Psoas muscle (tissue), 8 donors: ENCODE measurements at regions of chr2 and their contacts with region 1.

Region 1: DNA sequence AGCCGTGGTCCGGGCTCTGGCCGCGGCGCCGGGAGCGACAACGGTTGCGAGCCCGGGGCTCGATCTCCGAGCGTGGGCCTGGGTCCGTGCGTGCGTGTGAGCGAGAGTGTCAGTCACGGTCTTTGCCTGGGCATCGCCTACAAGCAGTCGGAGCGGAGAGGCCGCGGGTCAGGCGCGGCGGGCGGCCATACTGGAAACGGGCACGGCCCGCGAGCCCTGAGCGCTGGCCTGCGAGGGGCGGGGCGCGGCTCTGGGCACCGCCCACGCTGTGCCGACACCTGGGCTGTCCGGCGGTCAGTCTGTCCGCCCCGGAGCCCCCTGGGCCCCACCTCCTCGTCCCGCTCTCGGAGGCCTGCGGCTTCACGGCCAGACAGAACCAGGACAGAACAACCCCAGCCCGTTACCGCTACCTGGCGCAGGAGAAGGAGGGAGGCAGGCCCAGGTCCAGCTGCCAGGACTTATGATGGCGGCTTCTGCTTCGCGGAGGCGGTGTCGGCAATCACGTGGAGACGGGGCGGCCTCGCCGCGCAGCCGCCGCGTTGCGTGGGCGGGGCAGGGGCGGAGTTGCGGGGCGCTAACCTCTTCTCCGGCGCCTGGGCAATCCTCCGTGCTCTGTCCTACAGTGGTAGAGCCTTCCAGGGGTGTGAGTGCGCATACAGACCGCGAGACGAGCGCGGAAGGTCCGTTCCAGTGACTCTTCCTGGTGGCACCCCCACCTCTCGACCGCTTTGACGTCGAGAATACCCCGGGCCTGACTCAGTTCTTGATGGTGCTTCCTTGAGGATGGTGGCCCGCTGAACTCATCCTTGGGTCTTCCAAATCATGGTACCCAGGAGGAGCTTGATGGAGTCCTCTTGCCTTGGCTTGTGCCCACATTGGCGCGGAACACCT is at the start of gene TMEM131:
- DNase-seq: peak; percentile 96 to 98
- ATAC-seq: peak; percentile 93 to 96 (median 94)
- H3K4me3 ChIP-seq: peak within 1 kb of the TSS; percentile 90
- H3K27ac ChIP-seq: peak within 1 kb of the TSS; percentile 99
- H3K4me1 ChIP-seq: peaks cover 33% of the 10 kb centered on the region
- H3K27me3 ChIP-seq: no peaks in the 10 kb centered on the region
- CTCF ChIP-seq: no peak
- total RNA-seq, gene TMEM131: 20.1 to 33.3 (median 27.0) TPM

Region 2: GRCh38 chr2:97812931-97813330 is 183.0 kb before region 1 on chr2:
- intact Hi-C with region 1: loop called (anchors 5 to 10 kb)
- DNase-seq: no peak
- ATAC-seq: no peak
- H3K4me3 ChIP-seq: no peak overlapping the region
- H3K27ac ChIP-seq: no peak overlapping the region
- H3K4me1 ChIP-seq: no peaks in the 10 kb centered on the region
- H3K27me3 ChIP-seq: no peaks in the 10 kb centered on the region
- CTCF ChIP-seq: no peak

Region 3: DNA sequence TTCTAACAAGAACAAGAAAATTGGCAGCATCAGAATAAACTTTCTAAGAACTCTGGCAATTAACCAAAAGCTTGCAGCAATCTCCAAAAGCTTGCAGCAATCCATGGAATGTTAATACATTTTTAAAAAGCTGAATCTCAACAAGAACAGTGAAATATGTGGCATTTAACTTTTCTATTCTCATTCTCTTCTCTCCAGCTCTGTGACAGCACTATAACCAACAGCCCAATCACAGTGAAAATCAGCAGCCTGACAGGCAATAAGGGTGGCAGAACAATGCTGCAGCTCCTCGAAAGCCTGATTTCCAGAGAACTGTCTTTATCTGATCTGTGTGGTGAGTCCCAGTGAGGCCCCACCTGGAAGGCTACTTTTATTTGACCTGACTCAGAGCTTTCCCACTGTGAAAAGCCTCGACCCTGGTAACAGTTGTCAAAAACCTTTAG is 60.2 kb before region 1 on chr2:
- intact Hi-C with region 1: loop called in 1 of 2 experiments (anchors 5 kb)
- DNase-seq: no peak
- ATAC-seq: peak; percentile 23 to 38 (median 36)
- H3K4me3 ChIP-seq: peak overlapping the region; percentile 13
- H3K27ac ChIP-seq: peak overlapping the region; percentile 73
- H3K4me1 ChIP-seq: peaks cover 59% of the 10 kb centered on the region
- H3K27me3 ChIP-seq: no peaks in the 10 kb centered on the region
- CTCF ChIP-seq: no peak

Region 4: DNA sequence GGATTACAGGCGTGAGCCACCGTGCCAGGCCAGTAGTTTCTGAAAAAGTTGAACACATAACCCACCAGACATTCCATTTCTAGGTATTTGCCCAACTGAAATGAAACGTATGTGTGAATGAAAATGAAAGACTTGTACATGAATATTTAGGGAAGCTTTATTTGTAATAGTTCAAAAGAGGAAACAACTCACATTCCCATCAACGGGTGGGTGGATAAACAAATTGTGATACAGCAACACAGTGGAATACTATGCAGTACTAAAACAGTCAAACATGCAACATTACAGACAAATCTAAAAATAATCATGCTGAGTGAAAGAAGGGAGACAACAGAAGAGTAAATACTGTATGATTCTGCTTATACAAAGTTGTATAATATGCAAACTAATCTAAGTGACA is 47.1 kb before region 1 on chr2:
- intact Hi-C with region 1: no loop called
- DNase-seq: no peak
- ATAC-seq: no peak
- H3K4me3 ChIP-seq: no peak overlapping the region
- H3K27ac ChIP-seq: no peak overlapping the region
- H3K4me1 ChIP-seq: peaks cover 51% of the 10 kb centered on the region
- H3K27me3 ChIP-seq: no peaks in the 10 kb centered on the region
- CTCF ChIP-seq: no peak

Region 5: GRCh38 chr2:98157557-98157956 is 161.6 kb after region 1 on chr2:
- intact Hi-C with region 1: loop called (anchors 2 to 5 kb)
- DNase-seq: no peak
- ATAC-seq: no peak
- H3K4me3 ChIP-seq: no peak overlapping the region
- H3K27ac ChIP-seq: peak overlapping the region; percentile 94
- H3K4me1 ChIP-seq: peaks cover 50% of the 10 kb centered on the region
- H3K27me3 ChIP-seq: no peaks in the 10 kb centered on the region
- CTCF ChIP-seq: no peak